A549 (cell line): ENCODE measurements at regions of chr7 and their contacts with region 1.

Region 1: GRCh38 chr7:151017953-151018420 is 6.3 kb downstream of the ATG9B start:
- DNase-seq: peak; percentile 55 to 71
- ATAC-seq: peak; percentile 72 to 94
- H3K4me3 ChIP-seq: peak overlapping the region; percentile 30; the same call in 2 of the 3 replicates
- H3K27ac ChIP-seq: peak overlapping the region in 1 of 2 experiments; percentile 75; a peak in 2 of 6 replicates
- H3K4me1 ChIP-seq: peaks cover 6% of the 10 kb centered on the region; the same call in 2 of the 3 replicates
- CTCF ChIP-seq: peak; percentile 88
- EP300 ChIP-seq: no peak
- POLR2A ChIP-seq: no peak
- RAD21 ChIP-seq: peak; percentile 58 to 64

Region 2: DNA sequence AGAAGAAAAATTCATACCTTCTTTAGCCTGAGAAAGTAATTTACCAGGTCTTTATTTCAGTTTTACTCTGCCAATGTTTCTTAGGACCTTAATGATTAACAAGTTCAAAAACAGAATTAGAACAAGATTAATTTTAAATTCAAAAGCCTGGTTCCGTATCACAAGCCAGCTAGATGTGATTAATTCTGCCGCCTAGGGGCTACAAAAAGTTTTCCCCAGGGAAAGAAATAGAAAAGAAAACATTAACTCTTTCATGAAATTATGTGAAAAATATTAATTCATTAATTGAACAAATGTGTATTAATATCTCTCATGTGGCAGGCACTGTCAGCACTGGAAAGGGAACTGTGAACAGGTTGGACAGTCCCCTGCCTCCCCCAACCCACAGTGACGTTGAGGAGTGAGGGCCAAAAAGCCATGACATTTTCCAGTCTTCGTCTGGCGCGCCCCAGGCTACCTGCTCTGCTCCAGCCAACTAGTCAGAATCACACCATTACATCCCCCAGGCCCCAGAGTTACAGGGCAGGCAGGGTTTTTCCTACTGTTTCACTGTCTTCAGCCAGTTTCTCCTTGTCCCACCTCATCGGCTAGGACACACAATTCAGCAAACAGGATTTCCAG is 197.3 kb before region 1 on chr7:
- CTCF ChIA-PET with region 1: no interaction called
- POLR2A ChIA-PET with region 1: no interaction called
- DNase-seq: no peak
- ATAC-seq: no peak
- H3K4me3 ChIP-seq: no peak overlapping the region
- H3K27ac ChIP-seq: no peak overlapping the region
- H3K4me1 ChIP-seq: no peaks in the 10 kb centered on the region
- CTCF ChIP-seq: no peak
- EP300 ChIP-seq: no peak
- POLR2A ChIP-seq: no peak
- RAD21 ChIP-seq: no peak

Region 3: DNA sequence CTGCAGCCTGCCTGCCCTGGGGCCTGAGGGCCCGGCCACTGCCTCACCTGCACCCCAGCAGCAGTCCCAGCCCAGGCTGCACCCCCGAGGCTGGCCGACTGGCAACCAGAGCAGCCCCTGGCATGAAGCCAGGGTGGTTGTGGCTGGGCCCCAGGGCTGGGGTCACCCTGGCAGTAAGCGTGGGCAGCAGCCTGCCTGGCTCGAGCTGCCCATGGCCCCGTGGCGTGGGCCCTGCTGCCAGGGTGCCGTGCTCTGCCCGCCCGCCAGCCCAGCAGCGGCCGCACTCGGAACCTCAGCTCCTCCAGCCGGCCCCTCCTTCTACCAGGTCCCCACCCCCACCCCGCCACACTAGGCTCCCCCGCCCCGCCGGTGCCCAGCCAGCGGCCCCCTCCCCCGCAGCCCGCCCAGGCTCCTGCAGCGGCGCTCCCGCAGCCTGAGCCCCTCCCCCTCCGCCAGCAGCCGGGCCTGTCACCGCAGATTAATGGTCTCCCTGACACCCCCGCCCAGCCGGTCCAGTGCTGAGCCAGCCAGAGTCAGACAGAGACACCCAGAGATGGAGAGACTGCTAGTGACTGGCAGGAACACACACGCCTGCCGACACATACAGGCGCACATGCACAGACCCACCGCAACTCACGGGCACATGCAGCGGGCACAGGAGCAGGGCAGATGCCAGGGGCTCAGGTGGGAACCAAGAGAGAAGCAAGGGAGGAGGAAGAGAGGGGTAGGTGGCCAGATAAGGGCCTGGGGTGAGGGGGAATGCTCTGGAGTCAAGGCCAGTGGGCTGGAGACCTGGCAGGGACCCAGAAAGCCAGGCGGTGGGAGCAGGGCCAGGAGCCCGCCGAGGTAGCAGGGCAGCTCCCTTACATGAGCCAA is 62.2 kb before region 1 on chr7:
- CTCF ChIA-PET with region 1: interaction called, 22 read pairs
- POLR2A ChIA-PET with region 1: no interaction called
- DNase-seq: no peak
- ATAC-seq: no peak
- H3K4me3 ChIP-seq: no peak overlapping the region
- H3K27ac ChIP-seq: no peak overlapping the region
- H3K4me1 ChIP-seq: no peaks in the 10 kb centered on the region
- CTCF ChIP-seq: no peak
- EP300 ChIP-seq: no peak
- POLR2A ChIP-seq: no peak
- RAD21 ChIP-seq: no peak

Region 4: GRCh38 chr7:150974468-150975391 is 43.3 kb before region 1 on chr7:
- CTCF ChIA-PET with region 1: interaction called, 17 read pairs
- POLR2A ChIA-PET with region 1: no interaction called
- DNase-seq: peak; percentile 44 to 71
- ATAC-seq: peak; percentile 54 to 77
- H3K4me3 ChIP-seq: peak overlapping the region; percentile 83
- H3K27ac ChIP-seq: peak overlapping the region; percentile 74 to 84
- H3K4me1 ChIP-seq: peaks cover 34% of the 10 kb centered on the region
- CTCF ChIP-seq: peak; percentile 40
- EP300 ChIP-seq: no peak
- POLR2A ChIP-seq: peak; percentile 91
- RAD21 ChIP-seq: no peak

Region 5: DNA sequence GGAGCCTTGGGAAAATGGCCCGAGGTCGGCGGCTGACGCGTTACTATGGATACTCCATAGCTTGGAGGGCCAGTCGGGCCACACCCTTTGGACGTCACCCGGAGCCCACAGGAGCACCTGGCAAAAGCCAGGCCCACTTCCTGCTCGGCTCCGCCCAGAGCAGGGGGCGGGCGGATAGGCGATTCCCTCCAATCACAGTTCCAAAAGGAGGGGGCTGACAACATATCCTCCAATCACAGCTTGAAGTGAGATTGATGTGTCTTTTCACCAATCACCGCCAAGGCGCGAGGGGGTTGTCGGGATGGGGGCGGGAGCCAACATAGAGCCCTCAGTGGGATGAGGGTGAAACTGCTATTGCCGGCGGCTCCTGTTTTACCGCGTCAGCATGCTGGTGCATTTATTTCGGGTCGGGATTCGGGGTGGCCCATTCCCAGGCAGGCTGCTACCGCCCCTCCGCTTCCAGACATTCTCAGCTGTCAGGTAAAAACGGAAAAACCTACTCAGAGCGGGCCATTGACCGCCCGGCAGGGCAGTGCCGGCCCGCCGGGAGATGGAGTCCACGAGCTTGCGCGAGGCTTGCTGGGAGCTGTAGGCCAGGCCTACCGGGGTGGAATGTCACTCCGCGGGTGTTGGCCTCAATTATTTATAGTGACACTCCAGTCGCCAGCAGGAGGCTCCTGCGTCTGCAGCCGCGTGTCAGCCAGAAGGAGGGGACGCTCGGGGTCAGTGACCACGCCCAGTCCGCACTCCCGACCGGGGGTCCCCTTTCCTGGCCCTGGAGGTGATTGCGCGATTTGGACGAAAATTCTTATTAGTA is 10.4 kb after region 1 on chr7 and contains the start of gene ABCB8:
- CTCF ChIA-PET with region 1: interaction called, 34 read pairs
- POLR2A ChIA-PET with region 1: interaction called, 4 read pairs
- DNase-seq: peak; percentile 99 to 100
- ATAC-seq: peak; percentile 95 to 96
- H3K4me3 ChIP-seq: peak within 1 kb of the TSS; percentile 49
- H3K27ac ChIP-seq: peak within 1 kb of the TSS; percentile 73 to 90
- H3K4me1 ChIP-seq: peaks cover 21% of the 10 kb centered on the region; the same call in 2 of the 3 replicates
- CTCF ChIP-seq: peak; percentile 53
- EP300 ChIP-seq: no peak
- POLR2A ChIP-seq: peak; percentile 61
- RAD21 ChIP-seq: peak; percentile 56 to 65
- polyA plus RNA-seq, gene ABCB8: 19.6 and 22.7 TPM in 2 replicates

Region 6: DNA sequence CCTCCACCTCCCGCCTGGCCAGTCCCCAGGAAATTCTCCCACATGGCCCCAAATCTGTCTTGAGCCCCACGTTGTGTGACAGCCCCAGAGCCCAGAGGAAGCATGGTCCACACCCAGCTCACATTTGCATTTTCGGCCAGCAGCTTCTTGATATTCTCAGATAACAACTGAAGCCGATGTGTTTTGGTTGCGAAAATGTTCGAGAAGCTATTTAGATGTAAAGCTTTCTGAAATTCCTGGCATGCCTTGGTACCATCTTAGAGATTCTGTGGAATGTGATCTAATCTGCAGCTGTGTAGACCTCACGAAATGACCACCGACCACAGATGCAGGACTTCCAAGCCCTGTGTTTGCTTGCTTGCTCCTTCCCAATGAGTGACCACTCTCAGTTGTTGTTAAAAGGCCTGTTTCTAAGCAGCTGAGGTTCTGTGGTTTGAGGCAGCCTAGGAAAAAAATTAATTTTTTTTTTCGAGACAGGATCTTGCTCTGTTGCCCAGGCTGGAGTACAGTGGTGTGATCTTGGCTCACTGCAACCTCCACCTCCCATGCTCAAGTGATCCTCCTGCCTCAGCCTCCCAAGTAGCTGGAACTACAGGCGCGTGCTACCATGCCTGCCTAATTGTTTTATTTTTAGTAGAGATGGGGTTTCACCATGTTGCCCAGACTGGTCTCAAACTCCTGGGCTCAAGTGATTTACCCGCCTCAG is 50.2 kb after region 1 on chr7:
- CTCF ChIA-PET with region 1: interaction called, 11 read pairs
- POLR2A ChIA-PET with region 1: no interaction called
- DNase-seq: no peak
- ATAC-seq: no peak
- H3K4me3 ChIP-seq: no peak overlapping the region
- H3K27ac ChIP-seq: no peak overlapping the region
- H3K4me1 ChIP-seq: peaks cover 20% of the 10 kb centered on the region
- CTCF ChIP-seq: no peak
- EP300 ChIP-seq: no peak
- POLR2A ChIP-seq: no peak
- RAD21 ChIP-seq: no peak

Region 7: GRCh38 chr7:151808400-151809183 is 790.6 kb after region 1 on chr7:
- CTCF ChIA-PET with region 1: no interaction called
- POLR2A ChIA-PET with region 1: no interaction called
- DNase-seq: peak; percentile 76 to 87
- ATAC-seq: peak; percentile 89 to 92
- H3K4me3 ChIP-seq: no peak overlapping the region
- H3K27ac ChIP-seq: peak overlapping the region; percentile 60 to 86; a peak in 5 of 6 replicates
- H3K4me1 ChIP-seq: peaks cover 21% of the 10 kb centered on the region
- CTCF ChIP-seq: no peak
- EP300 ChIP-seq: no peak
- POLR2A ChIP-seq: no peak
- RAD21 ChIP-seq: no peak